ENCODE measurements at regions of chr1 and their contacts with region 1.

Region 1: DNA sequence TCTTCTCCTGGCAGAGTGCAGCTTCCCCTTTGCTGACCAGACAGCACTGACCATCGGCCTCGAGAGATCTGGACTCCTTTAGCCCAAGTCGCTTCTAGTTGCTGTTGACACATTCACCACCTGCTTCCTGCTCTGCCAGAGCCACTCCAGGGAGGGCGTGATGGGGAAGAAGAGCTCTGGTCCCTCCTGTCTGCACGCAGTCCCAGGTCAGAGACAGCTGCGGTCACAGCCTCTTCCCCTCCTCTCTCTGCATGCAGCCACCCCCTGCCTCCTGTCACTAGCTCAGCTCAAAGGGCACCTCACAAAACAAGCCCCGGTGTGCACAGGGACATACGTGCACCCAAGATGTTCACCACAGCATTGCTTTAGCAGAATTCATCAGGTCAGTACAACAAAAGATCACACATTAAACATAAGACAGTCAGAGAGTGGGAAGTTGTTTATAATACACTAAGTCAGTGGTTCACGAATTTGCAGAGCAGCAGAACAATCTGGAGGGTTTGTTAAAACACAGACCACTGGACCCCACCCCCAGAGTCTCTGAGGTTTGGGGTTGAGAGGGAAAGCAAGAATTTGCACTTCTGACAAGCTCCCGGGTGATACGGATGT is 132.9 kb downstream of the SYF2 start:
- DNase-seq: peak; percentile 22 to 78 (median 44)
- H3K4me3 ChIP-seq: peak overlapping the region; percentile 30
- H3K4me3 Mint-ChIP-seq: peak overlapping the region; percentile 34 to 89 (median 76)
- H3K27ac ChIP-seq: peak overlapping the region; percentile 0
- H3K27ac Mint-ChIP-seq: peak overlapping the region; percentile 25 to 95 (median 90)
- H3K4me1 ChIP-seq: peaks cover 71% of the 10 kb centered on the region
- H3K4me1 Mint-ChIP-seq: peaks cover 71 to 78% (median 75%) of the 10 kb centered on the region in 3 donors
- H3K27me3 ChIP-seq: no peaks in the 10 kb centered on the region
- H3K27me3 Mint-ChIP-seq: no peaks in the 10 kb centered on the region

Region 2: DNA sequence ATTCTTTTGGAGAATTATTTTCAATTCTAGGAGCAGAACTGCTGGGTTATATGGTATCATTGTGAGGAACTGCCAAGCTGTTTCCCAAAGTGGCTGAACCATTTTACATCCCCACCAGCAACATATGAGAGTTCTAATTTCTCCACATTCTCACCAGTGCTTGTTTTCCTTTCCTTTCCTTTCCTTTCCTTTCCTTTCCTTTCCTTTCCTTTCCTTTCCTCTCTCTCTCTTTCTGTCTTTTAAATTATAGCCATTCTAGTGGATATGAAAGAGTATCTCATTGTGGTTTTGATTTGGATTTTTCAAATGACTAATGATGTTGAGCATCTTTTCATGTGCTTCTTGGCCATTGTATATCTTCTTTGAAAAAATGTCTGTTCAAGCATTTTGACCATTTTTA is 214.7 kb before region 1 on chr1:
- CTCF ChIA-PET with region 1: no interaction called
- POLR2A ChIA-PET with region 1: no interaction called
- DNase-seq: no peak
- H3K4me3 ChIP-seq: no peak overlapping the region
- H3K4me3 Mint-ChIP-seq: no peak overlapping the region
- H3K27ac ChIP-seq: no peak overlapping the region
- H3K27ac Mint-ChIP-seq: peak overlapping the region in 1 of 8 donors; percentile 1
- H3K4me1 ChIP-seq: no peaks in the 10 kb centered on the region
- H3K4me1 Mint-ChIP-seq: peaks cover 0 to 4% (median 0%) of the 10 kb centered on the region in 3 donors
- H3K27me3 ChIP-seq: no peaks in the 10 kb centered on the region
- H3K27me3 Mint-ChIP-seq: peaks cover 0 to 6% of the 10 kb centered on the region in 2 donors

Region 3: GRCh38 chr1:24909388-24909898 is 190.0 kb before region 1 on chr1:
- CTCF ChIA-PET with region 1: interaction called, 10 read pairs
- POLR2A ChIA-PET with region 1: interaction called, 3 read pairs
- DNase-seq: no peak
- H3K4me3 ChIP-seq: no peak overlapping the region
- H3K4me3 Mint-ChIP-seq: peak overlapping the region; percentile 11 to 79 (median 53)
- H3K27ac ChIP-seq: peak overlapping the region; percentile 94
- H3K27ac Mint-ChIP-seq: peak overlapping the region; percentile 97 to 100 (median 100)
- H3K4me1 ChIP-seq: peaks cover 96% of the 10 kb centered on the region
- H3K4me1 Mint-ChIP-seq: peaks cover 66 to 96% (median 75%) of the 10 kb centered on the region in 3 donors
- H3K27me3 ChIP-seq: no peaks in the 10 kb centered on the region
- H3K27me3 Mint-ChIP-seq: peaks cover 0 to 4% of the 10 kb centered on the region in 2 donors

Region 4: GRCh38 chr1:24952413-24952841 is 147.0 kb before region 1 on chr1:
- CTCF ChIA-PET with region 1: interaction called, 18 read pairs
- POLR2A ChIA-PET with region 1: no interaction called
- DNase-seq: peak in 3 of 5 donors; percentile 36 to 70 (median 65)
- H3K4me3 ChIP-seq: no peak overlapping the region
- H3K4me3 Mint-ChIP-seq: peak overlapping the region in 6 of 7 donors; percentile 42 to 78 (median 65)
- H3K27ac ChIP-seq: no peak overlapping the region
- H3K27ac Mint-ChIP-seq: peak overlapping the region; percentile 2 to 93 (median 78)
- H3K4me1 ChIP-seq: peaks cover 61% of the 10 kb centered on the region
- H3K4me1 Mint-ChIP-seq: peaks cover 71 to 95% (median 80%) of the 10 kb centered on the region in 3 donors
- H3K27me3 ChIP-seq: no peaks in the 10 kb centered on the region
- H3K27me3 Mint-ChIP-seq: peaks cover 0 to 2% of the 10 kb centered on the region in 2 donors

Region 5: GRCh38 chr1:25022361-25023189 is 76.9 kb before region 1 on chr1:
- CTCF ChIA-PET with region 1: interaction called, 5 read pairs
- POLR2A ChIA-PET with region 1: interaction called, 16 read pairs
- DNase-seq: peak; percentile 93 to 99 (median 96)
- H3K4me3 ChIP-seq: peak overlapping the region; percentile 58
- H3K4me3 Mint-ChIP-seq: peak overlapping the region; percentile 48 to 84 (median 75)
- H3K27ac ChIP-seq: peak overlapping the region; percentile 97
- H3K27ac Mint-ChIP-seq: peak overlapping the region; percentile 89 to 100 (median 98)
- H3K4me1 ChIP-seq: peaks cover 79% of the 10 kb centered on the region
- H3K4me1 Mint-ChIP-seq: peaks cover 66 to 81% (median 75%) of the 10 kb centered on the region in 3 donors
- H3K27me3 ChIP-seq: no peaks in the 10 kb centered on the region
- H3K27me3 Mint-ChIP-seq: no peaks in the 10 kb centered on the region

Region 6: GRCh38 chr1:25065795-25066238 is 33.6 kb before region 1 on chr1:
- CTCF ChIA-PET with region 1: interaction called, 44 read pairs
- POLR2A ChIA-PET with region 1: interaction called, 14 read pairs
- DNase-seq: peak; percentile 12 to 90 (median 72)
- H3K4me3 ChIP-seq: peak overlapping the region; percentile 44
- H3K4me3 Mint-ChIP-seq: peak overlapping the region; percentile 70 to 95 (median 87)
- H3K27ac ChIP-seq: peak overlapping the region; percentile 68
- H3K27ac Mint-ChIP-seq: peak overlapping the region; percentile 90 to 98 (median 96)
- H3K4me1 ChIP-seq: peaks cover 34% of the 10 kb centered on the region
- H3K4me1 Mint-ChIP-seq: peaks cover 44 to 75% (median 48%) of the 10 kb centered on the region in 3 donors
- H3K27me3 ChIP-seq: no peaks in the 10 kb centered on the region
- H3K27me3 Mint-ChIP-seq: peaks cover 0 to 1% of the 10 kb centered on the region in 2 donors

Region 7: DNA sequence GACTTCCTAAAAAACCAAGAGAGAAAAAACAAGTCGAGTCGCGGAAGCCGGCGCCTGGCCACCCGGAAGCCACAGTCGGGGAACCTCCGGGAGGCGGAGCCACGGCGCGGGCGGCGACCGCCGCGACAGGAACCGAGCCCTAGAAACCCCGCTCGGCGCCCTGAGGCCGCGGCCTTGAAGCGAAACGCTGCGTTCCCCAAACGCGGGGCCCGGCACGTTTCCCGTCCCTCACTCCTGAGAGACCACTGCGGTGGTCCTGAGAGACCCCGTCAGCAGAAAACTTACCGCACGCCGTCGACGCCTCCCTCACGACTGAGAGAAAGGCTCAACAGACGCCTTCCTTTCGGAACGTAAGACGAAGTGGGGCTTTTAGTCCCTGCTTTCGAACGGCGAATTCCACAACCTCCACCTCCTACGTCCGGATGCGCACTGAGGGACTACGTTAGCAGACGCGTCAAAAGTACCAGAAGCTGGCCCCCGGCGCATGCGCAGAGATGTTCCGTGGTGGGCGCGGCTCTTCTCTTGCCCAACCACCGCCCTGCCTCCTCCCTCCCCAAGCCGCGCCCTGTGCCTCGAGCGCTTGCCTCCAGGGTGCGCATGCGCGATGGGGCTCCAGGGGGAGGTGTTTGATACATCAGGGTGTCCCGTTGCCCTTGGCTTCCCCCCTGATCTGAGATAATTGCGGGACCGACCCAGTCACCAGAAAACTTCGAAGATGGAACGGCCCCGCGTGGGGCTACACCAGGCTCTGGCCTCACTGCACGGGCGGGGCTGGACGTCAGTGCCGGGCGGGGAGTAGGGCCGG is 147.8 kb after region 1 on chr1 and contains the start of gene RSRP1:
- CTCF ChIA-PET with region 1: no interaction called
- POLR2A ChIA-PET with region 1: no interaction called
- DNase-seq: peak; percentile 99 to 100 (median 100)
- H3K4me3 ChIP-seq: peak within 1 kb of the TSS; percentile 99
- H3K4me3 Mint-ChIP-seq: peak within 1 kb of the TSS; percentile 94 to 100 (median 99)
- H3K27ac ChIP-seq: peak within 1 kb of the TSS; percentile 99
- H3K27ac Mint-ChIP-seq: peak within 1 kb of the TSS; percentile 98 to 100 (median 99)
- H3K4me1 ChIP-seq: peaks cover 44% of the 10 kb centered on the region
- H3K4me1 Mint-ChIP-seq: peaks cover 42 to 56% (median 54%) of the 10 kb centered on the region in 3 donors
- H3K27me3 ChIP-seq: no peaks in the 10 kb centered on the region
- H3K27me3 Mint-ChIP-seq: peaks cover 0 to 12% of the 10 kb centered on the region in 2 donors
- total RNA-seq, gene RSRP1: 116 to 124 TPM